ENCODE measurements at regions of chr6 and their contacts with region 1.

Region 1: GRCh38 chr6:129606664-129607063 is 103.3 kb downstream of the ARHGAP18 start:
- DNase-seq: no peak
- ATAC-seq: no peak

Region 2: GRCh38 chr6:129981598-129981997 is 374.9 kb after region 1 on chr6:
- intact Hi-C with region 1: no loop called
- DNase-seq: no peak
- ATAC-seq: no peak

Region 3: GRCh38 chr6:130020907-130021629 is 414.4 kb after region 1 on chr6:
- intact Hi-C with region 1: loop called in 1 of 2 experiments (anchors 10 kb)
- DNase-seq: peak; percentile 77 to 80
- ATAC-seq: peak; percentile 80

Region 4: DNA sequence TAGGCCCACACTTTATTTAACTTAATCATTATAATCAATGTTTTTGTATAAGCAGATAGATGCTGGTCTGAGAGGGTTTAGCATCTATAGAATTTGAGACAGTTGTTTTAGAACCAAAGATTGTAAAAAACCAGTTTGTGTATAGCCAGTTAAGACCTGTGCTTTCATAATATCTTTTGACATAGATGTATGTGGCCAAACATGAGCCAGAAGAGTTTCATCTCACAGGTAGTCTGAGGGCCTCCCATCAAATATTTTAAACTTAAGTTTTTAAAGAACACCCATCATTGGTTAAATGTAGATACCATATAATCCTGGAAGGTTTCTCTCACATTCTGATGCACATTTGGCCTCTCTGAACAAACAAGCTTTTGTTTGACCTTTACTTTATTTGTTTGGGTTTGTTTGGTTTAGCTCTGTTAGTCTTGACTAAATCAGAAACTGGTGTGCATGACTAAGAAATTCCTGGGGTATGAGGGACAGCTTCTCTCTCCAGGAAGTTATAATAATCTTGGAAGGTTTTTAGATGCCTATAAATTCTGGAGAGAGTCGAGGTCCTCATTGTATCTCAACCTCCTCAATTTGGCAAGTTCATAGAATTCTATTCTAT is 701.2 kb after region 1 on chr6:
- intact Hi-C with region 1: no loop called
- DNase-seq: no peak
- ATAC-seq: peak; percentile 64